ENCODE measurements at regions of chr11 and their contacts with region 1.

Region 1: DNA sequence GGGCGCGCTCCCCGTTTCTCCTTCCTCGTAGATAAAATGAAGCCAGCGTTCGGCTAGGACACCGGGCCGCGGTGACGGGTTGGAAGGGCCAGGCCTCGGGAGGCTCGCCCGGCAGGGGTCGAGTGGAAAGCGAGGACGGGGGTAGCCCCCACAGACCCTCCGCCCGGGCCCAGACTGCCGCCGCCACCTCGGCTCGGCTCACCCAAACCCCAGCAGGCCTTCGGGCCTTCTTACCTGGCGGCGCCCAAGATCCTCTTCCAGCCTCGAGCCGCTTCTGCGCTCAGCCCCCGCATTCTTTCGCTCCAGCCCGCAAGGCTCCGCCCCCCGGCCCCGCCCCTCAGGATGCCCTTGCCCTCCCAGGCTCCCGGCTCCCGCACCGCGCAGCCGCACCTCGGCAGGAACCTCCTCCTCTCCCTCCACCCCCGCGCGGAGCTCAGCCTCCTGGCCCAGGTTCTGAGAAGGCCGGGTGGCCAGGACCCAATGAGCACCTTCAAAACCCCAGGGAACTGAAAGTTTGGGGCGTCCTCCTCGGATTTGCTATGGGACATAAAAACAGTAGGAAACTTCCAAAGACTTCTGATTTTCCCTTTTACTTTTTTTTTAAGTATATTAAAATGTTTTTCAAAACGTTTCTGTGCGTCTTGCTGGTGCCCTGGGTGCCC is at the start of gene CD59:
- DNase-seq: peak; percentile 67 to 93
- ATAC-seq: peak; percentile 70 to 79 (median 72)
- H3K4me3 ChIP-seq: peak within 1 kb of the TSS; percentile 58
- H3K4me3 Mint-ChIP-seq: peak within 1 kb of the TSS; percentile 89
- H3K27ac ChIP-seq: peak within 1 kb of the TSS; percentile 43
- H3K27ac Mint-ChIP-seq: peak within 1 kb of the TSS; percentile 70 to 85
- H3K4me1 ChIP-seq: peaks cover 21% of the 10 kb centered on the region
- H3K4me1 Mint-ChIP-seq: peaks cover 23 to 25% of the 10 kb centered on the region in 2 donors
- H3K27me3 ChIP-seq: no peaks in the 10 kb centered on the region
- H3K27me3 Mint-ChIP-seq: no peaks in the 10 kb centered on the region
- CTCF ChIP-seq: no peak
- total RNA-seq, gene CD59: 25.0 to 29.4 (median 26.4) TPM

Region 2: GRCh38 chr11:33682446-33682845 is 53.8 kb before region 1 on chr11:
- intact Hi-C with region 1: no loop called
- DNase-seq: no peak
- ATAC-seq: no peak
- H3K4me3 ChIP-seq: no peak overlapping the region
- H3K4me3 Mint-ChIP-seq: no peak overlapping the region
- H3K27ac ChIP-seq: no peak overlapping the region
- H3K27ac Mint-ChIP-seq: no peak overlapping the region
- H3K4me1 ChIP-seq: no peaks in the 10 kb centered on the region
- H3K4me1 Mint-ChIP-seq: no peaks in the 10 kb centered on the region
- H3K27me3 ChIP-seq: no peaks in the 10 kb centered on the region
- H3K27me3 Mint-ChIP-seq: peaks cover 38 to 64% of the 10 kb centered on the region in 2 donors
- CTCF ChIP-seq: no peak

Region 3: DNA sequence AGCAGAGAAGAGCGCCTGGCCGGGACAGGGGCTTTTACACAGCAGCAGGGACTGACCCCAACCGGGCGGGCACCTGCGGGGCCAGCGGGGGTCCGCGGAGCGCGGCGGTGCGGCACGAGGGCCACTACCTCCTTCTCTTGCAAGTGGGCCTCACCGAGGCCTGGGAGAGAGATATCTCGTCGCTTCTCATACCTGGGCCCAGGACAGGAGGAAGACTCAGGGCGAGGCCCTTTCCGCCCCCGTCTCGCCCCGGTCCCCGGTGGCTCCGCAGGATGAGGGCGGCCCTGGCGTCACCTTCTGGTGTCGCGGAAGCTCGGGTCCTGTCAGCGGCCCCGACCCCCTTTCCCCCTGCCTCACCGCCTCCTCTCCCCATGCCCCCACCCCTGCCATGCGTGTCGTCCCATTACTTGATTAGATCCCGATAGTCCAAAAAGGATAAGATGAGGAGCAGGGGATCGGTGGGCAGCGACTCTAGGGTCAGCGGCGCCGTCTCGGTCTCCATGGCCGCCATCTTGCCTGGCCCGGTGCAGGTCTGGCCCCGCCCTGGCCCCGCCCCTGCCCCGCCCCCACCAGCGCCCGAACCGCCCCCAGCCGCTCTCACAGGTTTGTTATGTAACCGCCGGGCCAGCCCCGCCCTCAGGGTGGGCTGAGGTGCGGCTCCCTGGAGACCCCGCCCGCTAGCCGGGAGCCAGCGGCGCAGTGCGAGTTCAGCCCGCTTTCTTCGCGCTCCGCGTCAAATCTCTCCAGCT is 37.9 kb after region 1 on chr11 and contains the start of gene FBXO3:
- intact Hi-C with region 1: loop called (anchors 5 kb)
- DNase-seq: peak; percentile 79 to 93
- ATAC-seq: peak; percentile 88 to 95 (median 91)
- H3K4me3 ChIP-seq: peak within 1 kb of the TSS; percentile 76
- H3K4me3 Mint-ChIP-seq: peak within 1 kb of the TSS; percentile 96
- H3K27ac ChIP-seq: peak within 1 kb of the TSS; percentile 67
- H3K27ac Mint-ChIP-seq: peak within 1 kb of the TSS; percentile 84 to 94
- H3K4me1 ChIP-seq: peaks cover 31% of the 10 kb centered on the region
- H3K4me1 Mint-ChIP-seq: peaks cover 38 to 46% of the 10 kb centered on the region in 2 donors
- H3K27me3 ChIP-seq: peaks cover 3% of the 10 kb centered on the region
- H3K27me3 Mint-ChIP-seq: peaks cover 23 to 26% of the 10 kb centered on the region in 2 donors
- CTCF ChIP-seq: no peak
- total RNA-seq, gene FBXO3: 54.9 to 64.7 (median 56.2) TPM

Region 4: DNA sequence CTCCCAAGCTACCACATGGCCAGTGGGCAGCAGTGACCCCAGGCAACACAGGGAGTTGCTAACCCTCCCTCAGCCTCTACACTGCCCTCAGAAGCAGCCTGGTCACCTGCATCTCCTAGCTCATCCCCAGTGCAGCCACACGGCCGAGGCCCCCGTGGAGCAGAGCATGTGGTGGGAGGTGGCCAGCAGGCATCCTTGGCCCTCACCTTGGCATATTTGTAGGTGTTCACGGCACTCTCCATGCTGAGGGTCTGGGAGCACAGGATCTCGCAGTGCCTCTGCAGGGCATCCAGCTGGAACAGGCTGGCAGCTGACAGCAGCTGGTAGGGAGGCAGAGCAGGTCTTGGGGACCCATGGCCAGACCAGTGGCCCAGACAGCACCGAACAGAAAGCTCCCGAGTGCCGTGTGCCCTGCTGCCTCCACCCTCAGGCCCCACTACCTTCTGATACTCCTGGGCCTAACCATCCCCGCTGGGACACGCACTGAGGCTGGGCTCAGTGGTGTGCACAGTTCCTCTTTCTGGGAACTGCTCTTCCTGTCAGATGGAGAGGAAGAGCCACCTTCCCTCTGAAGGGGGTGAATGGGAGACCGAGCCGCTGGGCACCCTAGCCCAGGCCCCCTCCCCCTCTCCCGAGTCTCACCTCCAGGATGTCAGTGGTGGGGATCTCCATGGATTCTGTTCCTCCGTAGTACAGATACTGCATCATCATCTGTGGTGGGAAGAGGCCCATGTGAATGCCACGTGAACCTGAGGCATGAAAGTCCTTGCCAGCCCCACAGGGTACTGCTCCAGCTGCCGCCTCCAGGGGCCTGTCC is 418.0 kb after region 1 on chr11:
- intact Hi-C with region 1: no loop called
- DNase-seq: no peak
- ATAC-seq: peak in 1 of 3 donors; percentile 33
- H3K4me3 ChIP-seq: no peak overlapping the region
- H3K4me3 Mint-ChIP-seq: no peak overlapping the region
- H3K27ac ChIP-seq: no peak overlapping the region
- H3K27ac Mint-ChIP-seq: no peak overlapping the region
- H3K4me1 ChIP-seq: peaks cover 24% of the 10 kb centered on the region
- H3K4me1 Mint-ChIP-seq: peaks cover 0 to 11% of the 10 kb centered on the region in 2 donors
- H3K27me3 ChIP-seq: no peaks in the 10 kb centered on the region
- H3K27me3 Mint-ChIP-seq: no peaks in the 10 kb centered on the region
- CTCF ChIP-seq: no peak

Region 5: DNA sequence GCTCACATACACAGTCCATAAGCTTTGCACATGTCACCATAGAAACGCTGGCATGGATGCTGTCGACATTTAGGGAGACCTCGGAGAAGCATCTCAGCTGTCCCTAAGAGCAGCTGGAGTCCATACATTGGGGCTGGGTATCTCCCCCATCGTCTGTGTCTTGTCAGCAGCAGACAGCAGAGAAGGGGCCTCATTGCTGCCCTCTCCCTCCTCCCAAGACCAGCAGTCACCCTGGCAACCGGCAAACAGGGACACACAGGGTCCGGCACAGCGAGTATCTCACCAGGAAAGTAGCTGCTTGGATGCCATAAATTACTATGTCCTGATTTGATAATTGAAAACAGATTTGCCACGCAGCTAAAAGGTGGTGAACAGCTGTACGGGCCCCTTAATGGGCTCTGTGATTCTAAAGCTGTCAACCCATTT is 1487.1 kb after region 1 on chr11:
- intact Hi-C with region 1: no loop called
- DNase-seq: no peak
- ATAC-seq: no peak
- H3K4me3 ChIP-seq: no peak overlapping the region
- H3K4me3 Mint-ChIP-seq: no peak overlapping the region
- H3K27ac ChIP-seq: no peak overlapping the region
- H3K27ac Mint-ChIP-seq: no peak overlapping the region
- H3K4me1 ChIP-seq: peaks cover 3% of the 10 kb centered on the region
- H3K4me1 Mint-ChIP-seq: peaks cover 0 to 10% of the 10 kb centered on the region in 2 donors
- H3K27me3 ChIP-seq: no peaks in the 10 kb centered on the region
- H3K27me3 Mint-ChIP-seq: no peaks in the 10 kb centered on the region
- CTCF ChIP-seq: no peak

Measured in natural killer cell (primary cell).